HCT116 (cell line): ENCODE measurements at regions of chr2 and their contacts with region 1.

Region 1: DNA sequence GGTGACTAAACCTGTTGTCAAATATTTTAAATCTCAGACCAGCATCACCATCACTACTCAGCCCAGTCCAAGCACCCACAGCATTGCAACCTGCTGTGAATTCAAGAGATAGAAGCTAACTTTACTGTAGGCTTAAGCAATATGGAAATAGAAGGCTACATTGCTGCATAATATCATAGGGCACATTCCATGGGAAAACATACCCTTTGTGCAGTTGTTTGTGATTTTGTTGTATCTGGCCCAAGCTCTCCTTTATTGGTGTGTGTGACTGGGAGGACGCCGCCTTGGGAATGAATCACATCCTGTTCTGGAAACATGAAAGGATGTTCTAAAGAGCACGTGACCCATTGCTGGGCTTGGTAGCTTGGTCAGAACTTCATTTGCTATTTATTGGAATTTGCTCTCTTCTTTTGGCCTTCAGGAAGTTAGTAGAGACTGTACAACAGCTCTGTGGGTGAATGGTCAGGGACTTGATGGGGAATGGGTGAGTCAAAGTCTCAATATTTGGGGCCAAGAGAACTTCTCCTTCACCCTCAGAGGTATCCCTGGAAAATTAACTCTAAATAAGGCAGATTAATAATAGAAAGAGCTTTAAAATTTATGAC is 106.8 kb upstream of the SERPINE2 start:
- DNase-seq: peak; percentile 75
- ATAC-seq: peak; percentile 70
- H3K4me3 ChIP-seq: peak overlapping the region in 1 of 2 experiments; percentile 38; a peak in 2 of 4 replicates
- H3K27ac ChIP-seq: peak overlapping the region; percentile 42
- H3K4me1 ChIP-seq: peaks cover 19 to 58% of the 10 kb centered on the region in 2 experiments
- H3K27me3 ChIP-seq: no peaks in the 10 kb centered on the region
- CTCF ChIP-seq: no peak
- POLR2A ChIP-seq: no peak
- RAD21 ChIP-seq: no peak

Region 2: DNA sequence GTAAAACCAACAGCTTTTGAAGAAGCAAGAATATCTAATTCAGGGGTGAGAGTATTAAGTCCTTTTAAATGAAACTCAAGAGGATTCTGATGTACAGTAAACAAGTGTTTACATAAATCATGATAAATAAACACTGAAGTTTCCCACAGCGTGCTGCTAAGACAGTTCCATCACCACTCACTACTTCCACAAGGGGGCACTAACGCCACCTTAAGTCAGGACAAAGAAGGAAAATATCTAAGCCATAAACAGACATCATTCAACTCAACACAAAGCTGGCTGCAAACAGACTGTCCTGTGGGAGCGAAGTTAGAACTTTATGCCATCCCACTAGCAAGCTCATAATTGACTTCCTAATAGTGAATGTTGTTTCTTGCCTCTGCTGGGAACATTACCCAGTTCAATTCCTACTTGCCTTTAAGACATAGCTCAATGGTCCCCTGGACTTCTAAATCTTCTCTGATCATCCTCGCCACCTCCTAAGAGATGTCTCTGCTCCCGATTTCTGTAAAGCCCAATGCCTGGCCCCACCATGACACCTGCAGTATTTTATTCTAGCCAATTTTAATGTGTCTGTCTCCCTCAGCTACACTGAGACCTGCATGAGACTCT is 152.1 kb before region 1 on chr2:
- CTCF ChIA-PET with region 1: no interaction called
- POLR2A ChIA-PET with region 1: interaction called, 3 read pairs
- RAD21 ChIA-PET with region 1: no interaction called
- intact Hi-C with region 1: loop called (anchors 10 kb)
- DNase-seq: peak; percentile 78
- ATAC-seq: peak; percentile 85
- H3K4me3 ChIP-seq: no peak overlapping the region
- H3K27ac ChIP-seq: no peak overlapping the region
- H3K4me1 ChIP-seq: peaks cover 0 to 9% of the 10 kb centered on the region in 2 experiments; a peak in 2 of 4 replicates
- H3K27me3 ChIP-seq: no peaks in the 10 kb centered on the region
- CTCF ChIP-seq: peak; percentile 76 to 89 (median 87)
- POLR2A ChIP-seq: no peak
- RAD21 ChIP-seq: peak; percentile 92

Region 3: GRCh38 chr2:224039124-224039940 is 106.5 kb before region 1 on chr2 and contains the start of gene SERPINE2:
- CTCF ChIA-PET with region 1: no interaction called
- POLR2A ChIA-PET with region 1: interaction called, 3 read pairs
- RAD21 ChIA-PET with region 1: interaction called in 1 of 2 experiments, 4 read pairs
- intact Hi-C with region 1: loop called (anchors 5 kb)
- DNase-seq: peak; percentile 52
- ATAC-seq: peak; percentile 83
- H3K4me3 ChIP-seq: peak within 1 kb of the TSS; percentile 68 to 72
- H3K27ac ChIP-seq: peak within 1 kb of the TSS; percentile 67; the same call in 1 of the 2 replicates
- H3K4me1 ChIP-seq: peaks cover 7 to 18% of the 10 kb centered on the region in 2 experiments; a peak in 3 of 4 replicates
- H3K27me3 ChIP-seq: no peaks in the 10 kb centered on the region; the same call in 1 of the 2 replicates
- CTCF ChIP-seq: peak; percentile 49 to 90 (median 55)
- POLR2A ChIP-seq: peak; percentile 89
- RAD21 ChIP-seq: peak; percentile 98
- total RNA-seq, gene SERPINE2: 93.3 TPM

Region 4: DNA sequence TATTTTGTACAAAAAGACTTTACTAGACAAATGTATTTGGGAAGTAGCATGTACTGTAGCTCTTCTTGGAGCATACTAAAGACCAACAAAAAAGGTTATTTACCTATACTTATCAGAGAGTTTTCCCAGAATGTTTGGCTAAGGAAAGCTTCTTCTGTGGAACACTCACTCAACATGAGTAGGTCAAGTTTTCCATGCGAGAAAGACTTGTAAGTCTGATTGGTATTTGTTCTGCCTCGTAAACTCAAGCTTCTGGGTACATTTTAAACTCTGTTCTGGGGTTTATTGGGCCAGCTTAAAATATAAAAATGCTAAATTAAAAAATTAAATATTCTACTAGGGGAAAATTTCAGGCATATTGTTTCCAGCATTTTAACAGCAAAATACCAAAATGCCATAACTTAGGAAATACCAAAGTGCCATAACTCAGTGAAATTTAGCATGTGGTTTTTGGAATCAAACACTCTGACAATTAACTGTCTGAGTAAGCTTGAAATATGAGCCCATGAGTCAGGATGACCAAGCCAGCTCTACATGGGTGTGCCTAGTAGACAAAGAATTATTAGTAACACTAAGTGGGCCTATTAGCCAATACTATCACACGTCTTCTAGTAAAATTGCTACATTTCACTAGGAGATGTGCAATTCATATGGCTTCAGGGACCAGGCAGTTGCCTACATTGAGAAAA is 59.5 kb before region 1 on chr2:
- CTCF ChIA-PET with region 1: interaction called, 3 read pairs
- POLR2A ChIA-PET with region 1: interaction called, 10 read pairs
- RAD21 ChIA-PET with region 1: interaction called in 1 of 2 experiments, 3 read pairs
- intact Hi-C with region 1: loop called (anchors 5 kb)
- DNase-seq: peak; percentile 88
- ATAC-seq: peak; percentile 92
- H3K4me3 ChIP-seq: peak overlapping the region in 1 of 2 experiments; percentile 10; a peak in 2 of 4 replicates
- H3K27ac ChIP-seq: peak overlapping the region; percentile 62; the same call in 1 of the 2 replicates
- H3K4me1 ChIP-seq: peaks cover 21 to 34% of the 10 kb centered on the region in 2 experiments
- H3K27me3 ChIP-seq: no peaks in the 10 kb centered on the region
- CTCF ChIP-seq: no peak
- POLR2A ChIP-seq: no peak
- RAD21 ChIP-seq: peak; percentile 20

Region 5: DNA sequence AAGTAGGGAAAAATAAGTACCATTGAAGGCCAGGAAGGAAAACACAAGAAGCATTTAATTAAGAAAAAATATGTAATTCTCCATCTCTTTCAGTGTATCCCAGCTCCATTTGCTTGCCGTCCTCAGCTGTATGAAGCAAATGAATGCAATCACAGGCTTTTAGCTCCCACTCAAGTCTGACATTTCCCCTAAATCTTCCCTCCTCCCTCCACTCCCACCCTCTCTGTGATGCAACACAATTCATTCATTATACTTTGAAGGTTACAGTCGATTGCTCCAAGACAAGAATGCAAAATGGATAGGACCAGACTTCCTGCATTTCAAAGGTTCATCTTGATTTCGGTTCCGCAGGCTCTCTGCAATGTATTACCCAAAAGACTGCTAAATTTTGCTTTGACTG is 65.9 kb after region 1 on chr2:
- CTCF ChIA-PET with region 1: no interaction called
- POLR2A ChIA-PET with region 1: no interaction called
- RAD21 ChIA-PET with region 1: no interaction called
- intact Hi-C with region 1: no loop called
- DNase-seq: no peak
- ATAC-seq: no peak
- H3K4me3 ChIP-seq: no peak overlapping the region
- H3K27ac ChIP-seq: no peak overlapping the region
- H3K4me1 ChIP-seq: no peaks in the 10 kb centered on the region
- H3K27me3 ChIP-seq: no peaks in the 10 kb centered on the region
- CTCF ChIP-seq: no peak
- POLR2A ChIP-seq: no peak
- RAD21 ChIP-seq: no peak

Region 6: GRCh38 chr2:225556461-225556860 is 1410.6 kb after region 1 on chr2:
- CTCF ChIA-PET with region 1: no interaction called
- POLR2A ChIA-PET with region 1: no interaction called
- RAD21 ChIA-PET with region 1: no interaction called
- intact Hi-C with region 1: no loop called
- DNase-seq: no peak
- ATAC-seq: peak; percentile 34; the same call in 1 of the 2 replicates
- H3K4me3 ChIP-seq: no peak overlapping the region
- H3K27ac ChIP-seq: no peak overlapping the region
- H3K4me1 ChIP-seq: no peaks in the 10 kb centered on the region
- H3K27me3 ChIP-seq: no peaks in the 10 kb centered on the region
- CTCF ChIP-seq: peak in 2 of 3 experiments; percentile 18 to 28; a peak in 2 of 6 replicates
- POLR2A ChIP-seq: no peak
- RAD21 ChIP-seq: peak; percentile 38